ENCODE measurements at regions of chr1 and their contacts with region 1.

Region 1: DNA sequence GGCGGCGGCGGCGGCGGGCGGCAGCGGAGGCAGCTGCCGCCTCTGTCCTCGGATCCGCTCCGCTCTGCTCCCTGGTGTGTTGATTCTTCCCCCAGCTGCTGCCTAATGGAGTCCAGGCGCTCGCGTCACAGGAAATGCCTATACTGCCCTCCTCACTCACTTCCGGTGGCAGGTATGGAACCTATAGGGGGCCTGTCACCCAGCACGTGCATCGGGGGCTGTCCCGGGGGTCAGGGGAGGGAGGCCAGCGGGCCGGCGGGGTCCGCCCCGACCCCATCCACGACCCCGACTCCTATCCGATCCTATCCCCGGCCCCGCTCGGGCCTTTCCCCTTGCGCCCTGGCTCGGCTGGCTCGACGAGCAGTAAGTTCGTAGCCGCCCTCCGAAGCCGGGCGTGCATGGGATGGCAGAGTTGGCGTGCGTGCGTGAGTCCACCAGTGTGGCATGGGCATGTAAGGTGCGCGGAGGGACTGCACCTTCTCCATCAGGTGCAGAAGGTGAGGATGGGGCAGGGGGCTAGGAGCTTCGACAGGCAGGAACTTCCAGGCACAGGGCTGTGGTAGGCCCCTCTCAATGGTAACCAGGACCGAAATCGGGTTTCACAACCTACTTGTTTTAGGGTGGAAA is at the start of gene WDR26:
- DNase-seq: peak; percentile 90
- H3K4me3 Mint-ChIP-seq: peak within 1 kb of the TSS; percentile 95
- H3K27ac Mint-ChIP-seq: peak within 1 kb of the TSS; percentile 97
- H3K4me1 Mint-ChIP-seq: peaks cover 51% of the 10 kb centered on the region
- H3K27me3 Mint-ChIP-seq: no peaks in the 10 kb centered on the region
- total RNA-seq, gene WDR26: 69.2 to 72.2 TPM

Region 2: DNA sequence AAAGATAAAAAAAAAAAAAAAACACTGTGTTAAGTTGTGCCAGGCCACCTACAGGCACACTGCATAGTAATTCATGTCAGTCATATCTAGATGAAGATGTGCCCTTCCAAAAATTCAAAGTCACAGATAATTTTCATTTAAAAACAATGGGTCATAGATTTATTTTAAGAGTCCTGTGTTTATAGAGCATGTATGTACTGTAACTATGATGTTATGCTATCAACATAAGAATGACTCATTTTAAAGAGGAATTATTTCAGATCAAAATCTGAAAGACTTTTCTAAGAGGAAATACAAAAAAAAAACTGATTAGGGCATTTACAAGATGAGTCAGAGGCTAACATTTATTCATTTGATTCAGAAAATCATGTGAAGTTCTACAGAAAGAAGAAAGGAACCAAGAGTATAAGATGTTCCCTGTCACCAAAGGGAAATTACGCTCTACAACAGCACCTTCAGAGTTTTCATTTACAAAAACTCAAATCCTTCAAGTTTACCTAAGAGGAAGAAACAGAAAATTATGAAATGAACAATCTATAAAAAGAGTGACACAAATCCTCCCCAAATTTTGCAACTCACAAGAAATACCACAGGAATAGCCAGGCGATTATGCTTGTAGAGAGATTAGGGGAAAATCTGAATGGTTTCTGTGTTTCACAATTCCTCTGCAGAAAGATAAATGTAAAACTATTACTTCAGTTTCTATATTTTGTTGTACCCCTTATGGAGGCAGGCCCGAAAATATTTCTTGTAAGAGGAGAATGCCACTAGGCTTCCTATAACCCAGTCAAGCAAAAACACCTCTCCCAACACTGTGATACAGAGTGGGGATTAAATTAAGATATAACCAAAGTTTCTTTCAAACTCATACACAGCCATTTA is 602.8 kb before region 1 on chr1:
- CTCF ChIA-PET with region 1: no interaction called
- POLR2A ChIA-PET with region 1: no interaction called
- intact Hi-C with region 1: loop called (anchors 5 kb)
- DNase-seq: no peak
- H3K4me3 Mint-ChIP-seq: peak overlapping the region; percentile 54
- H3K27ac Mint-ChIP-seq: peak overlapping the region; percentile 96
- H3K4me1 Mint-ChIP-seq: peaks cover 26% of the 10 kb centered on the region
- H3K27me3 Mint-ChIP-seq: no peaks in the 10 kb centered on the region

Region 3: GRCh38 chr1:224182866-224183590 is 251.8 kb before region 1 on chr1 and contains the start of gene DEGS1:
- CTCF ChIA-PET with region 1: no interaction called
- POLR2A ChIA-PET with region 1: no interaction called
- intact Hi-C with region 1: loop called (anchors 5 kb)
- DNase-seq: peak; percentile 86
- H3K4me3 Mint-ChIP-seq: peak within 1 kb of the TSS; percentile 81
- H3K27ac Mint-ChIP-seq: peak within 1 kb of the TSS; percentile 90
- H3K4me1 Mint-ChIP-seq: peaks cover 45% of the 10 kb centered on the region
- H3K27me3 Mint-ChIP-seq: no peaks in the 10 kb centered on the region
- total RNA-seq, gene DEGS1: 27.9 to 28.4 TPM

Region 4: DNA sequence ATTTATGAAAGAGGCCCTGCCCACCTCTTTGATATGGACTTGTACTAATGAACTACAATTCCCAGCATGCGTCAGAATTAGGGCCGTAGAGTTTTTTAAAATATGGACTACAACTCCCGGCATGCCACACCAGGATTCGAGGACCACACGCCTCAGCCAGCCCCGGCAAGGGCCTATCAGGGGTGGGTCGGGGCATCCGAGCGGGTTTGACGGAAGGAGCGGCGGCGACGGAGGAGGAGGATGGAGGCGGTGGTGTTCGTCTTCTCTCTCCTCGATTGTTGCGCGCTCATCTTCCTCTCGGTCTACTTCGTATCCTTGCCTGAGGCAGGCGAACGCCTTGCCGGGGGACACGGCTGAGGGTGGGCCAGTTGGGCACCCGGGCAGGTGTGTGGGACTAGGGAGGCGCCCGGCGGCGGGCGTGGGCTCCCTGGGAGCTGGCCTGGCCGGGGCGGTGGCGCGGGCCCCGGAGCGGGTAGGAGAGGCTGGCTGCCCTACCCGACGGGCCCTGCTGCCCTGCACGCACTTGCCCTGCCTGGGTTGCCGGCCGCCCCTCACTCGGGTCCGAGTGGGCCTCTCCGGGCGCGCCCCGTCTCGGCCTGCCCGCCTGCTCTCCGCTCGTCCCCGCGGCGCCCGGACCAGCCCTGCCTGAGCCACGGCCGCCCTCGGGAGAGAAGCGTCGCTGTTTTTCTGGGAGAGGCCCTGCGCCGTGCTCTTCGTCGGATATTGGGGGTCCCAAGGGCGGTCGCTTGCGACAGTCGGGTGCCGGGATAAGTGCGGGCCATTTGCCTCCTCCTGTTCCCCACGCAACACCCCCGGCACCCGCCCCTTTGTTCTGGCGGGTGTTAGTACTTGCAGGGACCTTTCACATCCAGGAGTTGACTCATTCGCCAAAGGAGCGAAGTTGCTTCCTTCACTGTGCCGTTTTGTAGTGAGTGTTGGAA is 77.8 kb before region 1 on chr1 and contains the start of gene CNIH4:
- CTCF ChIA-PET with region 1: interaction called, 6 read pairs
- POLR2A ChIA-PET with region 1: interaction called, 4 read pairs
- intact Hi-C with region 1: loop called (anchors 1 kb)
- DNase-seq: peak; percentile 94
- H3K4me3 Mint-ChIP-seq: peak within 1 kb of the TSS; percentile 90
- H3K27ac Mint-ChIP-seq: peak within 1 kb of the TSS; percentile 88
- H3K4me1 Mint-ChIP-seq: peaks cover 27% of the 10 kb centered on the region
- H3K27me3 Mint-ChIP-seq: no peaks in the 10 kb centered on the region
- total RNA-seq, gene CNIH4: 48.3 to 51.6 TPM

Region 5: DNA sequence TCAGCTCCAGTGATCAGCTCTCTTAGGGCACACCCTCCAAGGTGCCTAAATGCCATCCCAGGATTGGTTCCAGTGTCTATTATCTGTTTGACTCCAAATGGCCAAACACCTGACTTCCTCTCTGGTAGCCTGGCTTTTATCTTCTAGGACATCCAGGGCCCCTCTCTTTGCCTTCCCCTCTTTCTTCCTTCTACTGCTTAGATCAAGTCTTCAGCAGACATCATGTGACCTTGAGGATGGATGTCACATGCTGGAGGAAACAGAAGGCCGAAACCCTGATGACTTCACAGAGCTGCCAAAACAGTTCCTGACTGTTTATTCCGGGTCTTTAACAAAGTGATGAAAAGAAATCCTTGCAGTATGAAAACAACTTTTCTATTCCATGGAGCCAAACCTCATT is 24.2 kb after region 1 on chr1:
- CTCF ChIA-PET with region 1: interaction called, 27 read pairs
- POLR2A ChIA-PET with region 1: no interaction called
- intact Hi-C with region 1: loop called (anchors 2 kb)
- DNase-seq: no peak
- H3K4me3 Mint-ChIP-seq: no peak overlapping the region
- H3K27ac Mint-ChIP-seq: no peak overlapping the region
- H3K4me1 Mint-ChIP-seq: peaks cover 12% of the 10 kb centered on the region
- H3K27me3 Mint-ChIP-seq: no peaks in the 10 kb centered on the region

Region 6: GRCh38 chr1:224488806-224489499 is 54.1 kb after region 1 on chr1:
- CTCF ChIA-PET with region 1: no interaction called
- POLR2A ChIA-PET with region 1: no interaction called
- intact Hi-C with region 1: no loop called
- DNase-seq: no peak
- H3K4me3 Mint-ChIP-seq: no peak overlapping the region
- H3K27ac Mint-ChIP-seq: no peak overlapping the region
- H3K4me1 Mint-ChIP-seq: peaks cover 9% of the 10 kb centered on the region
- H3K27me3 Mint-ChIP-seq: no peaks in the 10 kb centered on the region

Region 7: DNA sequence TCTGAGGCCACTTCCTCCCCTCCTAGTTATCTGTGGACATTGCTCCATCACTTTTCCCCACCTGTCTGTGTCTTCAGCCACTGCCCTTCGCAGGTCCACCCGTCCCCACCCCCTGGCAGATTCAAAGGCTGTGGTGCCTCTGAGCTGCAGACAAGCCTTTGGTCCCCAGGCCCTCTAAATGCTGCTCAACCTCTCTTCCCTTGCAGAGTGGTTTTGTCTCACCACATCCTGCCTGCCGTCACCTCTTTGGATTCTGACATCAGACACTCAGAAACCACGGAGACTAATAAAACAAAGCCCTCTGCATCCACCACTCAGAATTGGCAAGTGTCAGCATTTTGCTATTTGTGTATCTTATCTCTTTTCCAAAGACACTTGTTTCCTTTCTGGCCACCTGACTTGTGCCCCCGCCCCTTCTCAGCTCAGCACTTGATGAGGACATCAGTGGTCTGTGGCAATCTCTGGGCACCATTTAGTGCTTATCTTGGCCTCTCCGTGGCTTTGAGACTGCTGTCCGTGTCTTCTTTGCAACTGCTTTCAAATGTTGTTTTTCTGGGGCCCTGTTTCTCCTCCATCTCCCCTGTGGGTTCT is 189.0 kb after region 1 on chr1:
- CTCF ChIA-PET with region 1: no interaction called
- POLR2A ChIA-PET with region 1: no interaction called
- intact Hi-C with region 1: loop called (anchors 1 kb)
- DNase-seq: peak; percentile 90
- H3K4me3 Mint-ChIP-seq: peak overlapping the region; percentile 45
- H3K27ac Mint-ChIP-seq: peak overlapping the region; percentile 87
- H3K4me1 Mint-ChIP-seq: peaks cover 34% of the 10 kb centered on the region
- H3K27me3 Mint-ChIP-seq: peaks cover 28% of the 10 kb centered on the region

Measured in activated CD4-positive, alpha-beta memory T cell treated with anti-CD3 and anti-CD28 coated beads for 36 hours (primary cell).